ENCODE measurements at regions of chr1 and their contacts with region 1.

Region 1: DNA sequence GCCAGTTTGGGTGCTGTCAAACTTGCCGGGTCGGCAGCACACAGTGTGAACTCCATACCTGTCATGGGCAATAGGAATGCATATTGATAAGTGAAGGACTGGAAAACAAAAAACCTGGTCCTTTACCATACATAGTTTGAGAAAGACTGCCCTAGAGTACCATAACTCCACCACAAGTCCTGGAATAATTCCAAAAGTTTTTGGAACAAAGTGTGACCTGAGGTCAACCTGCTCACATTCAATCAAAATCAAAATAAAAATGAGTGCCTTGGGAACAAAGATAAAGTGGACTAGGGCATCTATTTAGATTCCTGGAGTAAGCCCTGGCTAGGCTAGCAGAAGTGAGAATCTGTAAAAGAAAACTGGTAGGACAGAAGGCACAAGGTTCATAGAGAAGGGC is 7.6 kb downstream of the PEX19 start:
- DNase-seq: no peak
- ATAC-seq: peak in 2 of 4 donors; percentile 15 to 51
- H3K4me3 ChIP-seq: no peak overlapping the region
- H3K27ac ChIP-seq: no peak overlapping the region
- H3K4me1 ChIP-seq: peaks cover 0 to 23% (median 4%) of the 10 kb centered on the region in 4 donors
- H3K27me3 ChIP-seq: no peaks in the 10 kb centered on the region
- CTCF ChIP-seq: no peak
- POLR2A ChIP-seq: no peak

Region 2: DNA sequence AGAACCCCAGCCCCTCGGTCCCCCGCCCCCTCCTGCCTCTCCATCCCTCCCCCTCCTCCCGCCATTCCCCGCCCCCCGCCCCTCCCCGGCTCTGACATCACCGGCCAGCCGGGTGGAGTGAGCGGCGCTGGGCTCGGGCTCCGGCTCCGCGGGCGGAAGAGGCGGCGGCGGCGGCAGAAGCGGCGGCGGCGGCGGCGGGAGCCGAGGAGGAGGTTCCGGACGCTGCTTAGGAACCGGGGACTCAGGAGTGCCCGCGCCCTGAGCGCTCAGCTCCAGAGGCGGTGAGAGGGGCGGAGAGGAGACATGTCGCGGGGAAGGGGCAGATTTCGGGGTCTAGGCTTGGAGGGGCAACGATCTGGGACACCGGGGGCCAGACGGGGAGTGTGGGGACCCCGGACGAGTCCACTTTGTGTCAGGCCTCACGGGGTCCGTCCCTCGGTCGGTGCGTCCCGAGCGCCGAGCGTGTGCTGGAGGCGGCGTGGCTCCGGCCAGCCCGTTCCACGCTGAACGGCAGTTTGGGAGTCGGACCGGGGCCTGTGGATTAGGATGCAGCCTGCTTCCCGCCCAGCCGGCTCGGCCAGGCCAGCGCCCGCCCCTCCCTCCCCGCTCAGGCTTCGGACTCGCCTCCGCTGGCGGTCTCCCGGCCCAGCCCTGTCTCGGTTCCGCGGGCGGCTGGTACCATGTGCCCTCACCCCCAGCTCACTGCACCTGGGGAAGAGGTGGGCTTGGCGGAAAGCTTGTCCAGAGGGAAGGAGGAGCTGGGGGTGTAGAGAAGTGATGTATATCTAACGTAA is 71.9 kb before region 1 on chr1 and contains the start of gene PEA15:
- intact Hi-C with region 1: loop called in 1 of 2 experiments (anchors 10 kb)
- DNase-seq: peak; percentile 79 to 84 (median 81)
- ATAC-seq: peak; percentile 84 to 92 (median 88)
- H3K4me3 ChIP-seq: peak within 1 kb of the TSS; percentile 74 to 97 (median 83)
- H3K27ac ChIP-seq: peak within 1 kb of the TSS; percentile 35 to 93 (median 65)
- H3K4me1 ChIP-seq: peaks cover 0 to 11% (median 0%) of the 10 kb centered on the region in 4 donors
- H3K27me3 ChIP-seq: no peaks in the 10 kb centered on the region
- CTCF ChIP-seq: no peak
- POLR2A ChIP-seq: peak; percentile 72
- total RNA-seq, gene PEA15: 11.5 to 45.7 (median 18.0) TPM

Region 3: GRCh38 chr1:160338580-160338979 is 61.2 kb after region 1 on chr1:
- intact Hi-C with region 1: no loop called
- DNase-seq: no peak
- ATAC-seq: no peak
- H3K4me3 ChIP-seq: no peak overlapping the region
- H3K27ac ChIP-seq: no peak overlapping the region
- H3K4me1 ChIP-seq: peaks cover 0 to 19% (median 6%) of the 10 kb centered on the region in 4 donors
- H3K27me3 ChIP-seq: no peaks in the 10 kb centered on the region
- CTCF ChIP-seq: no peak
- POLR2A ChIP-seq: no peak

Measured in right lobe of liver (tissue), 6 donors.